Tibial artery (tissue), 4 donors: ENCODE measurements at regions of chr4 and their contacts with region 1.

Region 1: GRCh38 chr4:152479428-152480026 is 56.4 kb downstream of the FBXW7 start:
- DNase-seq: no peak
- H3K4me3 ChIP-seq: no peak overlapping the region
- H3K27ac ChIP-seq: no peak overlapping the region
- H3K4me1 ChIP-seq: peaks cover 0 to 12% (median 0%) of the 10 kb centered on the region in 4 donors
- H3K27me3 ChIP-seq: no peaks in the 10 kb centered on the region
- CTCF ChIP-seq: no peak

Region 2: GRCh38 chr4:152443859-152444258 is 35.7 kb before region 1 on chr4:
- intact Hi-C with region 1: loop called (anchors 2 kb)
- DNase-seq: no peak
- H3K4me3 ChIP-seq: no peak overlapping the region
- H3K27ac ChIP-seq: no peak overlapping the region
- H3K4me1 ChIP-seq: peaks cover 0 to 5% (median 0%) of the 10 kb centered on the region in 4 donors
- H3K27me3 ChIP-seq: no peaks in the 10 kb centered on the region
- CTCF ChIP-seq: no peak